ENCODE measurements at regions of chr6 and their contacts with region 1.

Region 1: GRCh38 chr6:77292564-77293546 is 170.4 kb downstream of the HTR1B start:
- DNase-seq: peak; percentile 64
- ATAC-seq: peak; percentile 85
- H3K4me3 ChIP-seq: peak overlapping the region; percentile 27; the same call in 1 of the 2 replicates
- H3K27ac ChIP-seq: peak overlapping the region; percentile 48; the same call in 1 of the 2 replicates
- H3K4me1 ChIP-seq: no peaks in the 10 kb centered on the region
- H3K27me3 ChIP-seq: no peaks in the 10 kb centered on the region
- CTCF ChIP-seq: no peak

Region 2: DNA sequence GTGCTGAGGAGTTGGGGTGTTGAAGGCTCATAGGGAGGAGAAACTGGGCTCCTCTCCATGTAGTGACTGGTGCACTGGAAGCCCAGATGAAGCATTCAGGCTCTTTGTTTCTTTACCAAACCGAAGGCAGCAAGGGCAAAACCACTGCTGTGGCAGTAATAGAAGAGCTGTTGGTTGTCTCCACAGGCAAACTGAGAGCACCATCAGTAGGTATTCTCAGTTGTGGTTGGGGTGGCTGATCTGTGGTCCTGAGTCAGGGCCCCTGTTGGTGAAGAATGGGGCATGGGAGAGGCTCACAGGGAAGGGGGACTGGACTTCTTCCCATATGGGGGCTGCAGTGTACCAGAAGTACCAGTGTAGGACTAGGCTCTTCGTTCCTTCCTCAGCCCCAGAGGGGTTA is 760.2 kb before region 1 on chr6:
- CTCF ChIA-PET with region 1: no interaction called
- POLR2A ChIA-PET with region 1: no interaction called
- intact Hi-C with region 1: no loop called
- DNase-seq: no peak
- ATAC-seq: no peak
- H3K4me3 ChIP-seq: no peak overlapping the region
- H3K27ac ChIP-seq: no peak overlapping the region
- H3K4me1 ChIP-seq: no peaks in the 10 kb centered on the region
- H3K27me3 ChIP-seq: no peaks in the 10 kb centered on the region
- CTCF ChIP-seq: no peak

Region 3: GRCh38 chr6:77450924-77451323 is 158.1 kb after region 1 on chr6:
- CTCF ChIA-PET with region 1: no interaction called
- POLR2A ChIA-PET with region 1: no interaction called
- intact Hi-C with region 1: loop called (anchors 5 kb)
- DNase-seq: no peak
- ATAC-seq: no peak
- H3K4me3 ChIP-seq: no peak overlapping the region
- H3K27ac ChIP-seq: no peak overlapping the region
- H3K4me1 ChIP-seq: no peaks in the 10 kb centered on the region; the same call in 1 of the 2 replicates
- H3K27me3 ChIP-seq: no peaks in the 10 kb centered on the region
- CTCF ChIP-seq: 0 out of 2 replicates have a peak, but pooled peaks have one; percentile 11

Region 4: GRCh38 chr6:78598966-78599365 is 1306.1 kb after region 1 on chr6:
- CTCF ChIA-PET with region 1: no interaction called
- POLR2A ChIA-PET with region 1: interaction called, 34 read pairs
- intact Hi-C with region 1: no loop called
- DNase-seq: peak; percentile 95
- ATAC-seq: peak; percentile 98
- H3K4me3 ChIP-seq: no peak overlapping the region
- H3K27ac ChIP-seq: peak overlapping the region; percentile 37
- H3K4me1 ChIP-seq: peaks cover 22% of the 10 kb centered on the region
- H3K27me3 ChIP-seq: no peaks in the 10 kb centered on the region
- CTCF ChIP-seq: no peak